CD14-positive monocyte (primary cell): ENCODE measurements at regions of chr4 and their contacts with region 1.

Region 1: DNA sequence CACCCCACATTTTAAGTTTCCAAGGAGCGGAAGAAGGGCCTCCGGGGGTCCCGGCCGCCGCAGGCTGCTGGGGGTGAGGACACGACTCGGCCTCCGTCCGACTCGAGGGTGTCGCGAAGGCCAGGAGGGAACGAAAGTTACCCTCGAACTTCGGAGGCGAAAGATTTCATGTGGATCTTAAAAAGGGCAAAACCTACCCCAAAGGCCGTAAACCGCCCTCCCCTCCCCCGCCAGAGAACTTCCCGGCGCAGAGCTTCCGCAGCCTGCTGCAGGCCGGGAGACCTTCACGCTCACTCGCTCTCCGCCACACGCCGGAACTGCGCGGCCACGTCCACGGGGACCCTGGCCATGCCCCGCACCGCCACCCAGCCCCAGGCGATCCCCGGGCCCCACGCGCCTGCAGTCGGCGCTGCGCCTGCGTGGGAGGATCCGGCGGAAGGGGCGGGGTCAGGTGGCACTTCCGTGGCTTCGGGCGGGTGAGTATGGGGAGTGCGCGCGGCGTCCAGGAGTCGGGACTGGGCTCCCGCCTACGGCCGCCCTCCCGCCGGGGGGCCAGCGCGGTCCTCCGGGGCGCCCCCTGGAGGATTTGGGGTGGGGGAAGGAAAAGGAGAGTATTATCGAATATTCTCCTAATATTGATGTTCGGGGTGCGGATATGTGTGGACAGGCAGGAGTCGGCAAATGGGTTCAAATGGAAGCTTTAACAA is at the start of gene MMAA:
- DNase-seq: peak; percentile 86 to 92 (median 87)
- H3K4me3 ChIP-seq: peak within 1 kb of the TSS; percentile 66 to 90 (median 82)
- H3K4me3 Mint-ChIP-seq: peak within 1 kb of the TSS; percentile 91 to 93
- H3K27ac ChIP-seq: peak within 1 kb of the TSS; percentile 97 to 98
- H3K27ac Mint-ChIP-seq: peak within 1 kb of the TSS; percentile 91 to 98 (median 96)
- H3K4me1 ChIP-seq: peaks cover 9 to 15% of the 10 kb centered on the region in 2 donors
- H3K4me1 Mint-ChIP-seq: peaks cover 27% of the 10 kb centered on the region
- H3K27me3 ChIP-seq: no peaks in the 10 kb centered on the region
- H3K27me3 Mint-ChIP-seq: no peaks in the 10 kb centered on the region
- CTCF ChIP-seq: peak; percentile 35
- polyA plus RNA-seq, gene MMAA: 2.1 to 4.0 (median 2.5) TPM

Region 2: DNA sequence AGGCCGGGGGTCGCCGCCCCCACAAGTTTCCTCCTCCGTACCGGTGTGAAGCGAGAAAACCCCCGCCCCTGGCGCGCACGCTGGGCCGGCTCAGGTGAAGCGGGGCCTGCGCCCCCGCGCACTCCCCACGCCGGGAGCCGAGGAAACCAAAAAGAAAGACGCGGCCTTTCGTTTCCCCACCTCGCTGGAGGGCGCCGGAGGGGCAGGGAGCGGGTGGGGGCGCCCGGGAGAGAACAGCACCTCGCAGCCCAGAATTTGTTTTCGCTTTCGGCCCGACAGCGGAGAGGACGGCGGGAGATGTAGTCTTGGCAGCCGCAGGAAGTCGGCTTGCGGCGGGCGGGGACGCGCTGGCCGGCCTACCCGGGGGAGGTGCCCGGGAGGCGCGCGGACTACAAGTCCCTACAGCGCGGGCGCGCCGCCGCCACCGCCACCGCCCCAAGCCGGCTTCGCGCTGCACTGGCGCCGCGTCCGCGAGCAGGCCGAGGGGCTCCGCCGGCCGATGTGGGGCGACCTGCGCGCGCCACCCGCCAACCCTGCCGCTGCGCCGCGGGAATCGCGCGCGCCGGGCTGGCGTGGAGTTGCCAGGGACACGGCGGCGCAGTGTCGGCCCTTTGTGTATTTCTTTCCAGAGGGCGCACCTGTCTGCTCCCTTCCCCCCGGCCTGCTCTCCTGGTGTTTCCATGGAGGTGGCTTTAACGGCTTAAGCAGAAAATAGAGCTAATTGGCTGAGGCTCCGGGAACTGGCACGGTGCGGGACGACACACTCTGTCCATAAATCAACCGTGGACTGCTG is 438.6 kb before region 1 on chr4 and contains the start of gene OTUD4:
- intact Hi-C with region 1: loop called in 1 of 2 experiments (anchors 5 kb)
- DNase-seq: peak; percentile 91 to 93 (median 91)
- H3K4me3 ChIP-seq: peak within 1 kb of the TSS; percentile 67 to 96 (median 80)
- H3K4me3 Mint-ChIP-seq: peak within 1 kb of the TSS; percentile 85 to 93
- H3K27ac ChIP-seq: peak within 1 kb of the TSS; percentile 86 to 93
- H3K27ac Mint-ChIP-seq: peak within 1 kb of the TSS; percentile 93 to 98 (median 95)
- H3K4me1 ChIP-seq: peaks cover 30 to 34% of the 10 kb centered on the region in 2 donors
- H3K4me1 Mint-ChIP-seq: peaks cover 36% of the 10 kb centered on the region
- H3K27me3 ChIP-seq: no peaks in the 10 kb centered on the region
- H3K27me3 Mint-ChIP-seq: peaks cover 0 to 4% (median 3%) of the 10 kb centered on the region in 3 donors
- CTCF ChIP-seq: no peak
- polyA plus RNA-seq, gene OTUD4: 7.5 to 14.4 (median 9.0) TPM

Region 3: DNA sequence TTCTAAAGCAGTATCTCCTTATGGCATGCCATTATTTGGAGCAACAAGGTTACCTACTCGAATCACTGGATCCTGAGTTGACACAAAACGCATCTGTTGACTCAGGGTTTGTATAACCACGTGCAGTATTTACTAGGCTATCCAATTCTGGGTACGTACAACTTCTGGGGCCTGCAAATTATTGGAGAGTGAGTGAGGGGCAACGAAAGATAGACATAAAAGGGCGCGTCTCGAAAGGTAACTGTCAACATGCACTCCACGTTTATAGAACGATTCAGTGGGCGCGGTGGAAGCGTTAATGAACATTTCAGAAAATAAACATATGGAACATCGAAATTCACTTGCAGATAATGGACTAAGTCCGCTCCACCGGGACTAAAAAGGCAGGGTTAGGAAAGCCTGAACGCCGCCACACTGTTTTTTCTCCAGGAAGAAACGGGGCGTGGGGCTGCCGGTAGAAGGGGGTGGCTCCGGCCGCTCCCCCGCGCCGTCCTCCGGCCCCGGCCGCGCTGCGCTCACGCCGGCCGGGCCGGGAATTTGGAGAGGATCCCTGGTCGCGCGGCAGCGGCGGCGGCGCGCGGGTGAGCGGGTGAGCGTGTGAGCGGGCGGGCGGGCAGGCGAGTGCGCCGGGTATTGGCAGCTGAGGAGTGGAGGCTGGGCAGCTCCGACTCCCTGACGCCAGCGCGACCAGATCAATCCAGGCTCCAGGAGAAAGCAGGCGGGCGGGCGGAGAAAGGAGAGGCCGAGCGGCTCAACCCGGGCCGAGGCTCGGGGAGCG is 137.7 kb before region 1 on chr4 and contains the start of gene SMAD1:
- intact Hi-C with region 1: loop called in 1 of 2 experiments (anchors 5 kb)
- DNase-seq: peak; percentile 25 to 48 (median 45)
- H3K4me3 ChIP-seq: peak within 1 kb of the TSS; percentile 69 to 88 (median 82)
- H3K4me3 Mint-ChIP-seq: peak within 1 kb of the TSS in 1 of 2 donors; percentile 96
- H3K27ac ChIP-seq: peak within 1 kb of the TSS in 1 of 2 donors; percentile 79
- H3K27ac Mint-ChIP-seq: peak within 1 kb of the TSS; percentile 38 to 86 (median 59)
- H3K4me1 ChIP-seq: peaks cover 26 to 29% of the 10 kb centered on the region in 2 donors
- H3K4me1 Mint-ChIP-seq: peaks cover 19% of the 10 kb centered on the region
- H3K27me3 ChIP-seq: no peaks in the 10 kb centered on the region
- H3K27me3 Mint-ChIP-seq: peaks cover 0 to 3% (median 0%) of the 10 kb centered on the region in 3 donors
- CTCF ChIP-seq: no peak
- polyA plus RNA-seq, gene SMAD1: 8.2 to 14.4 (median 8.7) TPM

Region 4: GRCh38 chr4:145660064-145660463 is 41.0 kb after region 1 on chr4:
- intact Hi-C with region 1: no loop called
- DNase-seq: no peak
- H3K4me3 ChIP-seq: no peak overlapping the region
- H3K4me3 Mint-ChIP-seq: no peak overlapping the region
- H3K27ac ChIP-seq: no peak overlapping the region
- H3K27ac Mint-ChIP-seq: no peak overlapping the region
- H3K4me1 ChIP-seq: no peaks in the 10 kb centered on the region
- H3K4me1 Mint-ChIP-seq: no peaks in the 10 kb centered on the region
- H3K27me3 ChIP-seq: no peaks in the 10 kb centered on the region
- H3K27me3 Mint-ChIP-seq: no peaks in the 10 kb centered on the region
- CTCF ChIP-seq: no peak

Region 5: DNA sequence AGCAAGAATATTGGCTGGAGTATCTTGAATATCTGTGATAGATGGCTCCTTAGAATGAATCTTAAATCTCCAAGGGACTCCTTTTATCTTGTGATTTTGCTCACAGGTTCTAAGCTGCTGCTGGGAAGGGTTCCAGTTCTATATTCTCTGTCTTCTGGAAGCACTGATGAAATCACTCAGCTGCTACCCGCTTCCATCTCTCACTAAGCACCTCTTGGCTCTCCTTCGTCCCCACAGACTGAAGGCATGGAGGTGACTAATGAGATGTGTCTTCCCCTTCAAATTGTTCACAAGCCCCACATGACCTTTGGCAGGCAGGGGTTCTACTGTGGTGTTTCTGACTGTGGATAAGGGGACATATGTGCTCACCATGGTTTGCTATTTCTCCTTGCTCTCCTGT is 136.7 kb after region 1 on chr4:
- intact Hi-C with region 1: no loop called
- DNase-seq: no peak
- H3K4me3 ChIP-seq: no peak overlapping the region
- H3K4me3 Mint-ChIP-seq: no peak overlapping the region
- H3K27ac ChIP-seq: no peak overlapping the region
- H3K27ac Mint-ChIP-seq: no peak overlapping the region
- H3K4me1 ChIP-seq: no peaks in the 10 kb centered on the region
- H3K4me1 Mint-ChIP-seq: no peaks in the 10 kb centered on the region
- H3K27me3 ChIP-seq: no peaks in the 10 kb centered on the region
- H3K27me3 Mint-ChIP-seq: no peaks in the 10 kb centered on the region
- CTCF ChIP-seq: no peak